ENCODE measurements at regions of chr9 and their contacts with region 1.

Region 1: DNA sequence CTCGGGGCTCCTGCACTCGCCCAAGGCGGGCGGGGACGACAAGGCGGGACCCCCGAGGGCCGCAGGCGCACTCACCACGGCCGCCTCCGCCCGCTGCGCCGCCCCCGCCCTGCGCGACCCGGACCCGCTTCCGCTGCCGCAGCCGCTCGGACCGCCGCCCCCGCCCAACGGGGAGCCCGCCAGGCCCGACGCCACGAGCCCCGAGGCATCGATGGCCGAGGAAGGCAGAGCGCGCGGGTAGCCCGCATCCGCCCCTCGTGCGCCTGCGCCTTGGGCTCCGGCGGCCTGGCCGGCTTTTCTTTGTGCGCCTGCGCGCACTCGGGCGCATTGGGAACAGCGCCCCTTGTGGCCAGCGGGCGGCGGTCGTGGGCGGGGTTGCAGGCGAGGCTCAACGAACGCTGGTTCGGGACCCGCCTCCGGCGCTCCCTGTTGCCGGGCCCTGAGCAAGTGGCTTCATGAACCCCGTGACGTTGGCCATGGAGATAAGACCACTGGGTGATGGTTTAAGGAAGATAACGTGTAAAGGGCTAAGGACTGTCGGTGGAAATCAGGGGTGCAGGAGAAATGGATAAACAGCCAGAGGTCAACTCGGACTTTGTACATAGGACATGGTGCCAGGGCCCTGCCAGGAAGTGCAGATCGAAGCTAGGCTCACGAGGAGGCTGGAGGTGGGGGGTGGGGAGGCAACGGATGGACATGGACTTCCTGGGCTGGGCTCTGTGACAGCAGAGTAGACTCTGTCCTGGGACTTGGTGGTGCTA is at the starts of genes C8G and FBXW5:
- DNase-seq: peak; percentile 95 to 98
- H3K4me3 ChIP-seq: peak within 1 kb of the TSS; percentile 84 to 99 (median 91)
- H3K27ac ChIP-seq: peak within 1 kb of the TSS; percentile 80 to 96 (median 87)
- H3K4me1 ChIP-seq: peaks cover 35 to 58% (median 56%) of the 10 kb centered on the region in 4 donors
- H3K27me3 ChIP-seq: no peaks in the 10 kb centered on the region
- CTCF ChIP-seq: peak in 6 of 7 experiments; percentile 86 to 100 (median 96)
- EP300 ChIP-seq: no peak
- POLR2A ChIP-seq: no peak
- total RNA-seq, gene C8G: not detected
- total RNA-seq, gene FBXW5: 47.7 to 435 (median 174) TPM

Region 2: DNA sequence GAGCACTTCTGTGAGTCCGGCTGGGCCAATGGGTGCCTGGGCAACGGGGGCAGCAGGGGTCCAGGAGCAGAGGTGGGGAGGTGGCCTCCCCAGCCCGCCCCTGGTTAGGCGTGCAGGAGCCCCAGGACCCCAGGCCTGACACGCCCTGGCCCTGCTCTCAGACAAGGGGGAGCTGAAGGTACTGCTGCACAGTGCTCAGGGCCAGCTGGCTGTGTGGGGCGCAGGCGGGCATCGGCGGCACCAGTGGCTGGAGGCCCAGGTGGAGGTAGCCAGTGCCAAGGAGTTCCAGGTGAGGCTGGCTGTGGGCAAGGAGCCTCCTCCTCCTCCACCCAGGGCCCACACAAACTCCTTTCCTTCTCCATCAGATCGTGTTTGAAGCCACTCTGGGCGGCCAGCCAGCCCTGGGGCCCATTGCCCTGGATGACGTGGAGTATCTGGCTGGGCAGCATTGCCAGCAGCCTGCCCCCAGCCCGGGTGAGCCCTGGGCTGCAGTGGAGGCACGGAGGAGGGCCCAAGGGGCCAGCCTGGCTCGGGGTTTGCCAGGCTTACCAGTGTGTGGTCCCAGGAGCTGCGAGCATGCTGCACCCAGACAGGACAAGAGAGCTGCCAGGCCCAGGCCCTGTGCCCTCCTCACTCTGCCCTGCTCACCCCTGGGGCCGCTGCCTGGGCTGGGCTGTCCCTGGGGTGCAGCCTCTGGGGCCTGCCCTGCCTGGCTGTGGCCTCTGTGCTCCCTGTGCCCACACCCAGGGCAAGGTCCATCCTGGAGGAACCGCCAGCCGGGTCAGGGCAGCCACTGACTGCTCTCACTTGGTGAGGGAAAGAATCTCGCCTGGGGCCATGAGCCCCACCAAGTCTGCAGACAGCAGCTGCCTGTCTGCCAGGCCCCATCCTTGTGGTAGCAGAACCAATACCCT is 85.6 kb before region 1 on chr9:
- intact Hi-C with region 1: loop called (anchors 10 kb)
- DNase-seq: peak; percentile 72 to 95
- H3K4me3 ChIP-seq: peak overlapping the region in 1 of 4 donors; percentile 13
- H3K27ac ChIP-seq: peak overlapping the region; percentile 76 to 90 (median 81)
- H3K4me1 ChIP-seq: peaks cover 43 to 87% (median 77%) of the 10 kb centered on the region in 4 donors
- H3K27me3 ChIP-seq: no peaks in the 10 kb centered on the region
- CTCF ChIP-seq: no peak
- EP300 ChIP-seq: no peak
- POLR2A ChIP-seq: no peak